ENCODE measurements at regions of chr5 and their contacts with region 1.

Region 1: DNA sequence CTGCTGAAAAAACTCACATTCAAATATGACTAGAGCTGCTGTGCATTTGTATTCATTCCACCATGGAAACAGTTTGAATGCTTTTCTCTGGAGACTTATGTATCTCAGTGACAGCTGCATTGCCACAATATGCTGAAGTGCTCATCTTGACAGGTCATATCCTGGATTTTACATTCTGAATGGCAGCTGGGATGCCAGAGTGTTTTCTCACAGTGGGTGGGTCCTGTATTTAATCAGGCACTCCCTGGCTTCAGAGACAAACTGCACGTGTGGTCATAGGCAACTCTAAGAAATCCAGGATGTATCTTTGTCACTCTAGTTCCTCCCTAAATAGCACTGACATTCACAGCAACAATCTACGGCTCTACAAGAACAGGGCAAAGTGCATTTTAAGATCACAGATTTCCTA is 75.6 kb downstream of the ST8SIA4 start:
- DNase-seq: no peak
- ATAC-seq: peak; percentile 35
- H3K4me3 Mint-ChIP-seq: peak overlapping the region; percentile 72
- H3K27ac Mint-ChIP-seq: peak overlapping the region; percentile 89
- H3K4me1 Mint-ChIP-seq: peaks cover 39% of the 10 kb centered on the region
- H3K27me3 Mint-ChIP-seq: no peaks in the 10 kb centered on the region
- CTCF ChIP-seq: no peak

Region 2: GRCh38 chr5:100535060-100536005 is 292.2 kb before region 1 on chr5 and contains the start of gene FAM174A:
- CTCF ChIA-PET with region 1: no interaction called
- POLR2A ChIA-PET with region 1: no interaction called
- intact Hi-C with region 1: loop called (anchors 5 kb)
- DNase-seq: peak; percentile 87
- ATAC-seq: peak; percentile 91
- H3K4me3 Mint-ChIP-seq: peak within 1 kb of the TSS; percentile 99
- H3K27ac Mint-ChIP-seq: peak within 1 kb of the TSS; percentile 91
- H3K4me1 Mint-ChIP-seq: peaks cover 21% of the 10 kb centered on the region
- H3K27me3 Mint-ChIP-seq: peaks cover 2% of the 10 kb centered on the region
- CTCF ChIP-seq: no peak
- total RNA-seq, gene FAM174A: 4.1 and 5.2 TPM in 2 replicates

Region 3: GRCh38 chr5:100840384-100840783 is 12.9 kb after region 1 on chr5:
- CTCF ChIA-PET with region 1: interaction called, 10 read pairs
- POLR2A ChIA-PET with region 1: interaction called, 21 read pairs
- intact Hi-C with region 1: loop called (anchors 1 kb)
- DNase-seq: no peak
- ATAC-seq: peak; percentile 90
- H3K4me3 Mint-ChIP-seq: peak overlapping the region; percentile 63
- H3K27ac Mint-ChIP-seq: peak overlapping the region; percentile 86
- H3K4me1 Mint-ChIP-seq: peaks cover 84% of the 10 kb centered on the region
- H3K27me3 Mint-ChIP-seq: no peaks in the 10 kb centered on the region
- CTCF ChIP-seq: no peak

Region 4: GRCh38 chr5:100852988-100853449 is 25.5 kb after region 1 on chr5:
- CTCF ChIA-PET with region 1: interaction called, 3 read pairs
- POLR2A ChIA-PET with region 1: interaction called, 9 read pairs
- intact Hi-C with region 1: loop called (anchors 1 kb)
- DNase-seq: no peak
- ATAC-seq: peak; percentile 92
- H3K4me3 Mint-ChIP-seq: peak overlapping the region; percentile 55
- H3K27ac Mint-ChIP-seq: peak overlapping the region; percentile 83
- H3K4me1 Mint-ChIP-seq: peaks cover 55% of the 10 kb centered on the region
- H3K27me3 Mint-ChIP-seq: no peaks in the 10 kb centered on the region
- CTCF ChIP-seq: no peak

Region 5: DNA sequence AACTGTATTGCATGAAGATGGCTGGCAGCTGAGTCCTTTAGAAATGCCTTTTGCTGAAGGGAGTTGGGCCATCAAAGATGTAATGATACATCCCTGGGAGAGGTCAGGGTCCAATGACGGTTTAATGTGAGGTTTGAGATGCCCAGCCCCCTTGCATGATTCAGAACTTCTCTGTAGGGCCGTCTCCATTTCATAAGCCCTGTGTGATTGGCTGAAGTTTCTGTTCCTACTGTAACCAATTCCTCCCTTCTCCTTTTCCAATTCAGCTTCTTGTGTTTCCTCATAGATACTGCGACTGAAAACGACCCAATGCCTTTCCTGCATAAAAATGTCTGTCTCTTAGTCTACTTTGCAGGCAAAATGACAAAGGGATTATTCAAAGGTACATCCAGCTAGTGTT is 123.5 kb after region 1 on chr5:
- CTCF ChIA-PET with region 1: no interaction called
- POLR2A ChIA-PET with region 1: no interaction called
- intact Hi-C with region 1: no loop called
- DNase-seq: no peak
- ATAC-seq: no peak
- H3K4me3 Mint-ChIP-seq: no peak overlapping the region
- H3K27ac Mint-ChIP-seq: no peak overlapping the region
- H3K4me1 Mint-ChIP-seq: no peaks in the 10 kb centered on the region
- H3K27me3 Mint-ChIP-seq: no peaks in the 10 kb centered on the region
- CTCF ChIP-seq: no peak